CD8-positive, alpha-beta memory T cell (primary cell): ENCODE measurements at regions of chr14 and their contacts with region 1.

Region 1: DNA sequence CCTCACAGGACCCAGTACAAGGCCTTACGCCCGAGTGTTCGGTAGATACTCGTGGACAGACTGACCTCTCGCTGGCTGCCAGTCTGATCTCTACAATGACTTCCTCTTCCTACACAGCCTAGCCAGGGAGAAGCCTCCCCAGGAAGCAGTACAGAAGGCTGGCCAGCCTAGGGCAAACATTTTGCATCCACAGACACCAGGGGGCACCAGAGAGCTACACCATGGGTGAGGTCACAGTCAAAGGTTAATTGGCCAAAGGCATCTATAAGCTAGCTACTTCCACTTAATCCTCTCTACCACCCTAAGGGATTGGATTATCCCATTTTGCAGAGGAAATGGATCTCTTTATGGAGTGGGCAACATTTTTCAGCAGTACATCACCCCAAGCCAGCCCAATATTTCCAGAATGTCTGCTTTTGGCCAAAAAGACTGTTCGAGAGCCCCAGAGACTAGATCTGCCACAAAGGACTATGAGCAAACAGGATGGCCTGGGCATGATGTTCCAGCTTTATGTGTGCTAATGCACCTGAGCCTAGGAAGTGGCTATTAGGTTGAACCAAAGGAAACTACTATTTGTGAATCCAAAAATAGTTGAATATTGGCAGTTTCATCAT is 14.6 kb upstream of the PNMA1 start:
- DNase-seq: peak; percentile 71 to 87 (median 83)
- H3K4me3 ChIP-seq: no peak overlapping the region
- H3K4me3 Mint-ChIP-seq: no peak overlapping the region
- H3K27ac ChIP-seq: peak overlapping the region; percentile 17
- H3K27ac Mint-ChIP-seq: peak overlapping the region; percentile 71 to 94 (median 84)
- H3K4me1 ChIP-seq: peaks cover 9% of the 10 kb centered on the region
- H3K4me1 Mint-ChIP-seq: peaks cover 11 to 45% (median 23%) of the 10 kb centered on the region in 3 donors
- H3K27me3 ChIP-seq: no peaks in the 10 kb centered on the region
- H3K27me3 Mint-ChIP-seq: no peaks in the 10 kb centered on the region

Region 2: DNA sequence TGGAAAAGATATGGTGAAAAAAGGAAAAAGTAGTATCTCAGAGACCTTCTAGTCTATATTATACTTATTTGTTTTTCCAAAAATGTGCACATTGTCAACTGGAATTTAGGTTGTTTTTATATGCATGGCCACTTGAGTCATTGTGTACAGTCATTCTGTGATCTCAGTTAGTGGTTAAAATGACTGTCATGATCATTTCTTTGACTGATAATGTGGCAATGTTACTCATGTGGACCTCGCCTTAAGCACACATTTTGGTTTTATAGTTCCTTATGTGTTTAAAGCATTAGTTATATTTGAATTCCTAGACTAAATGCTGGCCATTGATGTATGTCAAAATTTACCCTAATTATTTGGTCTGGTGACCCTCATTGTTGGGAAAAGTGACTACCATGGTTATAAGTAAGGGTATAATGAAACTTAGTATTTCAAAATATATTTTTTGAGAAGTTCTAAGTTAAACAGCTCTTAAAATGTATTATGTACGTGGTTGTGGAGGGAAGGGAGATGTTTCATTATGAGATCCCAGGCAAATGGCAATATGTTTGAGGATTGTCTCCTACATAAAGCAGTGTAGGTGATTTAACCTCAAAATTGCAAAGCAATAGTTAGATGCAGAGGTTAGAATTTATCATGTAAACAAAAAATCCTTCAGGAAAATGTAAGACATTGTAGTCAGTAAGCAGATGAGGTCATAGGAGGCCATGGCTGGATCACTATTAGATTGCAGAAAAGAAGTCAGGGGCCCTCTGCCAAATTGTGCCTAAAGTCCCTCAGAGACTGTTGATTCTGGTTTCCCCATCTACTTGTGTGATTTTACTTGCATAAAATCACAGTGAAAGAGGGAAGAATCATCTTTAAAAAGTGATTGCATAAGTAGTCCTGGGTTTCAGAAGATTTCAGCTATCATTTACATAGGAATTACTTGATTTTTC is 32.1 kb before region 1 on chr14:
- CTCF ChIA-PET with region 1: no interaction called
- POLR2A ChIA-PET with region 1: no interaction called
- DNase-seq: no peak
- H3K4me3 ChIP-seq: no peak overlapping the region
- H3K4me3 Mint-ChIP-seq: no peak overlapping the region
- H3K27ac ChIP-seq: no peak overlapping the region
- H3K27ac Mint-ChIP-seq: peak overlapping the region in 2 of 8 donors; percentile 4 to 6
- H3K4me1 ChIP-seq: no peaks in the 10 kb centered on the region
- H3K4me1 Mint-ChIP-seq: no peaks in the 10 kb centered on the region
- H3K27me3 ChIP-seq: no peaks in the 10 kb centered on the region
- H3K27me3 Mint-ChIP-seq: no peaks in the 10 kb centered on the region

Region 3: GRCh38 chr14:73741386-73741875 is 12.6 kb after region 1 on chr14:
- CTCF ChIA-PET with region 1: interaction called, 34 read pairs
- POLR2A ChIA-PET with region 1: no interaction called
- DNase-seq: peak; percentile 62 to 79 (median 66)
- H3K4me3 ChIP-seq: peak overlapping the region; percentile 62
- H3K4me3 Mint-ChIP-seq: peak overlapping the region; percentile 79 to 94 (median 85)
- H3K27ac ChIP-seq: peak overlapping the region; percentile 68
- H3K27ac Mint-ChIP-seq: peak overlapping the region; percentile 91 to 98 (median 95)
- H3K4me1 ChIP-seq: peaks cover 66% of the 10 kb centered on the region
- H3K4me1 Mint-ChIP-seq: peaks cover 59 to 88% (median 64%) of the 10 kb centered on the region in 3 donors
- H3K27me3 ChIP-seq: no peaks in the 10 kb centered on the region
- H3K27me3 Mint-ChIP-seq: no peaks in the 10 kb centered on the region

Region 4: GRCh38 chr14:73771848-73772638 is 43.2 kb after region 1 on chr14:
- CTCF ChIA-PET with region 1: interaction called, 31 read pairs
- POLR2A ChIA-PET with region 1: no interaction called
- DNase-seq: peak; percentile 53 to 83 (median 68)
- H3K4me3 ChIP-seq: peak overlapping the region; percentile 28
- H3K4me3 Mint-ChIP-seq: peak overlapping the region; percentile 60 to 82 (median 71)
- H3K27ac ChIP-seq: peak overlapping the region; percentile 49
- H3K27ac Mint-ChIP-seq: peak overlapping the region; percentile 85 to 99 (median 94)
- H3K4me1 ChIP-seq: peaks cover 66% of the 10 kb centered on the region
- H3K4me1 Mint-ChIP-seq: peaks cover 68 to 83% (median 73%) of the 10 kb centered on the region in 3 donors
- H3K27me3 ChIP-seq: no peaks in the 10 kb centered on the region
- H3K27me3 Mint-ChIP-seq: no peaks in the 10 kb centered on the region

Region 5: DNA sequence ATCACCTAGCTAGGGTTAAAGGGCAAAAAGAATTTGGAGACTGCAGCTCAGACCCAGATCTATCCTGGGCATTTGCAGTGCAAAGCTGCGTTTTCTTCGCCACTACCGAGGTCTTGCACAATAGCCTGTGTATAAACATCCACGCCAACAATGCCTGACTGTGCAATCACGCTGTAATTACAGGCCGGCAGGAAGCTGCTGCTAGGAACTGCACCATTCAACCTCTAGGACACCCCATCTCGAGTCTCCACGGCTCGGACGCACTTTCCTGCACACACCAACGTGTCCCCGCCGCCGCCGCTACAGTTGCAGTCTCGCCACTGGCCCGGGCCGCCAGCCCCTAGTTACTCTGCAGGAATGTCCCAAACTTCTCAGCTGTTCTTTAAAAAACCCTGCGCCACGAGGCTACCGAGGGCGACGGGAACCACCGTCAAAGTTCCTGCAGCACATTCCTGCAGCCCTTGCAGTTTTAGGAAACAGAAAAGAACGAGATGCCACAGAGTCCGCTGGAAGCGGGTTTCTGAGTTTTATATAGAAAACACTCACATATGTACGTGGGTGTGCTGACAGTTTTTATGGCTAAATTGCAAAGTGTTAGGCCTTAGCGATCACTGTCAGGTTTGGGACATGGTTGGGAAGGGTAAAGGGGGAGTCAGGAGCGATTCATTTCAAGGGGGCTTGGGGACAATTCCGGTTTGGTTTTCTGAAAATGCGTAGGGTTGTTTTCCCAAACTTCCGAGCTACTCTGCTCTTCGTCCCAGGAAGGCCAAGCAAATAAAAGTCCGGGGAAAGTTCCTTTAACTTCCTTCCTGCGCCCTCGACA is 57.3 kb after region 1 on chr14:
- CTCF ChIA-PET with region 1: interaction called, 15 read pairs
- POLR2A ChIA-PET with region 1: interaction called, 7 read pairs
- DNase-seq: peak; percentile 48 to 79 (median 60)
- H3K4me3 ChIP-seq: peak overlapping the region; percentile 73
- H3K4me3 Mint-ChIP-seq: peak overlapping the region; percentile 90 to 99 (median 97)
- H3K27ac ChIP-seq: peak overlapping the region; percentile 66
- H3K27ac Mint-ChIP-seq: peak overlapping the region; percentile 92 to 100 (median 98)
- H3K4me1 ChIP-seq: peaks cover 56% of the 10 kb centered on the region
- H3K4me1 Mint-ChIP-seq: peaks cover 58 to 66% (median 63%) of the 10 kb centered on the region in 3 donors
- H3K27me3 ChIP-seq: no peaks in the 10 kb centered on the region
- H3K27me3 Mint-ChIP-seq: peaks cover 0 to 3% of the 10 kb centered on the region in 2 donors

Region 6: GRCh38 chr14:73913256-73913655 is 184.4 kb after region 1 on chr14:
- CTCF ChIA-PET with region 1: no interaction called
- POLR2A ChIA-PET with region 1: no interaction called
- DNase-seq: no peak
- H3K4me3 ChIP-seq: no peak overlapping the region
- H3K4me3 Mint-ChIP-seq: no peak overlapping the region
- H3K27ac ChIP-seq: no peak overlapping the region
- H3K27ac Mint-ChIP-seq: no peak overlapping the region
- H3K4me1 ChIP-seq: no peaks in the 10 kb centered on the region
- H3K4me1 Mint-ChIP-seq: peaks cover 9 to 16% (median 10%) of the 10 kb centered on the region in 3 donors
- H3K27me3 ChIP-seq: no peaks in the 10 kb centered on the region
- H3K27me3 Mint-ChIP-seq: no peaks in the 10 kb centered on the region